Psoas muscle (tissue), 8 donors: ENCODE measurements at regions of chr2 and their contacts with region 1.

Region 1: DNA sequence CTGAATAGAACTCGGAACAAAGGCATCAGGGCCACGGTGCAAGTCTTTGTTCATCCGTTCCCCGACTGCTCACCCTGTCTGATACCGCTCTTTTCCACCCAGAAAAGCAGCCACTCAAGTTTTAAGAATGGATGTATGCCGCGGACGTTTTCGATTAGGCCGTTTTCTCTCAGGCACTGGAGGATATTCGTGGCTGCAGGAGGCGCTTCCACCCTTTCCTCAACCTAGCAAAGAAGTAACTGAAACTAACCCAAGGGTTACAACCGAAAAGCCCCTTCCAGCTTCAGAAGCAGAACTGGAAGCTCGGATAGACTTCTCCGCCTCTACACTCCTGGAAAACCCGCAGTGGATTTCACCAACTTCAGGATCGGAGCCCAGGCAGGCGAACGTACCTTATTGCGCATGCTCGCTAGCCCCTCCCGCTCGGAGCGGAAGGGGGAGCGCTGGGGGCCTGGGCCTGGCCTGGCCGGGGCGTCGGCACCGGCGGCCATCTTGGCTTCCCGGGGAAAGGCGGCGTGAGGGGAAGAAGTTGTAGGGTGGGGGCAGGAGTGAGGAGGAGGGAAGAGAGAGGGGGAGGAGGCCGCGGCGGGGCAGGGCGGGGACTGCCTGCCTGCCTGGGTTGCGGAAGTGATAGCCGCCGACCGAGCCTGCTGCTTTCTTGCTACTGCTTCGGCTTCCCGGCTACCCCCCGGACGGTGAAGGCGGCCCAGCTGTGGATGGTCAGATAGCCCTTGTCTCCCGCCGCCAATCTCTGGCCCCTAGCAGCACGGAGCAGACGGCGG is at the start of gene ACTR3:
- DNase-seq: peak; percentile 98
- ATAC-seq: peak; percentile 96 to 99 (median 98)
- H3K4me3 ChIP-seq: peak within 1 kb of the TSS; percentile 92
- H3K27ac ChIP-seq: peak within 1 kb of the TSS; percentile 98
- H3K4me1 ChIP-seq: peaks cover 47% of the 10 kb centered on the region
- H3K27me3 ChIP-seq: no peaks in the 10 kb centered on the region
- CTCF ChIP-seq: no peak
- total RNA-seq, gene ACTR3: 55.5 to 113 (median 88.2) TPM

Region 2: GRCh38 chr2:113818382-113818951 is 71.2 kb before region 1 on chr2:
- intact Hi-C with region 1: loop called in 1 of 2 experiments (anchors 5 kb)
- DNase-seq: peak; percentile 21 to 58
- ATAC-seq: peak; percentile 93 to 99 (median 96)
- H3K4me3 ChIP-seq: peak overlapping the region; percentile 43
- H3K27ac ChIP-seq: peak overlapping the region; percentile 75
- H3K4me1 ChIP-seq: peaks cover 5% of the 10 kb centered on the region
- H3K27me3 ChIP-seq: no peaks in the 10 kb centered on the region
- CTCF ChIP-seq: no peak